Ascending aorta (tissue), 2 donors: ENCODE measurements at regions of chr4 and their contacts with region 1.

Region 1: GRCh38 chr4:40924096-40924792 is 174.5 kb downstream of the NSUN7 start:
- DNase-seq: peak in 1 of 2 donors; percentile 83
- H3K4me3 ChIP-seq: peak overlapping the region in 1 of 2 donors; percentile 43
- H3K27ac ChIP-seq: peak overlapping the region; percentile 87
- H3K4me1 ChIP-seq: peaks cover 7 to 15% of the 10 kb centered on the region in 2 donors
- H3K27me3 ChIP-seq: no peaks in the 10 kb centered on the region
- CTCF ChIP-seq: peak; percentile 60 to 90 (median 80)

Region 2: GRCh38 chr4:40908702-40909362 is 15.4 kb before region 1 on chr4:
- intact Hi-C with region 1: loop called (anchors 1 kb)
- DNase-seq: peak; percentile 26 to 90
- H3K4me3 ChIP-seq: peak overlapping the region in 1 of 2 donors; percentile 4
- H3K27ac ChIP-seq: peak overlapping the region; percentile 79 to 91
- H3K4me1 ChIP-seq: peaks cover 12 to 25% of the 10 kb centered on the region in 2 donors
- H3K27me3 ChIP-seq: no peaks in the 10 kb centered on the region
- CTCF ChIP-seq: peak; percentile 92 to 94 (median 92)

Region 3: DNA sequence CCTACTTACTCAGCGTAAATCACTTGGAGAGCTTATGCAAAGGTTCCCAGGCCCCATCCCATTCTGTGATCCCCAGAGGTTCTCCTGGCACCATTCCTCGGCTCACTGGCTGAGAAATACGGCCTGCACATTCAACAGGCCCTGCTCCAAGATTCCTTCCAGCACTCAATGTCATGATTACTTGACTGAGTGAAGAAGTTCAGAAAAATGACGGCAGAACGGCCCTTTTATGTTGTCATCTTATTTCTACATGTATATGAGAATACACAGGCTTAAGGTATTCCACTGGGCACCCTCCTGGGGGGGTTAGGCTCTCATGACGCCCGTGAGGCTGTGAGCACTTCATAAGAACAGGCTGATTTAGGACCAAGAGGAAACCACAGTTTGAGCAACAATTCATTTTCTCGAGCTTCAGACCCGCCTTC is 16.1 kb after region 1 on chr4:
- intact Hi-C with region 1: loop called (anchors 1 kb)
- DNase-seq: peak in 1 of 2 donors; percentile 79
- H3K4me3 ChIP-seq: peak overlapping the region in 1 of 2 donors; percentile 18
- H3K27ac ChIP-seq: peak overlapping the region; percentile 49 to 72
- H3K4me1 ChIP-seq: peaks cover 15 to 43% of the 10 kb centered on the region in 2 donors
- H3K27me3 ChIP-seq: no peaks in the 10 kb centered on the region
- CTCF ChIP-seq: no peak

Region 4: DNA sequence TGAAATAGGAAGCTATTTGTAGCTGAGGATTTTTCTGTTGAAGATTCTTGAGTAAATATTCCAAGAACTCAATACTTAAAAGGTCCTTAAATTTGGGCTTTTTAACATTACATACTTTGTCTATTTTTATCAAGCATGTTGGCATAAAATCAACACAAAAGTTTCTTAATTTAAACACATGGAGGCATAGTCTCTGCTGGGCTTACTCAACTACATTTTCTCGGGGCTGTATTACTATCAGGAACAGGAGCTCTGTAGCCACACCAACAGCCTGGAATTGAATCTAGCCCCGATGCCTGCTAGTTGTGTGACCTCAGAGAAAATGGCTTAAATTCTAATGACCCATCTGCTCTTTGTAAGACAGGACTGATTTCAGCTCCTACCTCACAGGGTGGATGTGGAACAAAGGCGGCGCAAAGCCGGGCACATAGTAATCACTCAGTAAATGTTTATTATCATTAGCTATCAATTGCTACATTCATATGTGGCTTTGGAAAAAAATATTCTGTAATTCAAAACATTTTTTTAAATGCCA is 32.5 kb after region 1 on chr4:
- intact Hi-C with region 1: loop called (anchors 2 kb)
- DNase-seq: no peak
- H3K4me3 ChIP-seq: peak overlapping the region in 1 of 2 donors; percentile 8
- H3K27ac ChIP-seq: peak overlapping the region; percentile 92 to 95
- H3K4me1 ChIP-seq: peaks cover 25 to 52% of the 10 kb centered on the region in 2 donors
- H3K27me3 ChIP-seq: no peaks in the 10 kb centered on the region
- CTCF ChIP-seq: no peak

Region 5: GRCh38 chr4:40976343-40976742 is 52.1 kb after region 1 on chr4:
- intact Hi-C with region 1: loop called (anchors 1 kb)
- DNase-seq: no peak
- H3K4me3 ChIP-seq: no peak overlapping the region
- H3K27ac ChIP-seq: no peak overlapping the region
- H3K4me1 ChIP-seq: no peaks in the 10 kb centered on the region
- H3K27me3 ChIP-seq: no peaks in the 10 kb centered on the region
- CTCF ChIP-seq: peak; percentile 50 to 79 (median 53)

Region 6: DNA sequence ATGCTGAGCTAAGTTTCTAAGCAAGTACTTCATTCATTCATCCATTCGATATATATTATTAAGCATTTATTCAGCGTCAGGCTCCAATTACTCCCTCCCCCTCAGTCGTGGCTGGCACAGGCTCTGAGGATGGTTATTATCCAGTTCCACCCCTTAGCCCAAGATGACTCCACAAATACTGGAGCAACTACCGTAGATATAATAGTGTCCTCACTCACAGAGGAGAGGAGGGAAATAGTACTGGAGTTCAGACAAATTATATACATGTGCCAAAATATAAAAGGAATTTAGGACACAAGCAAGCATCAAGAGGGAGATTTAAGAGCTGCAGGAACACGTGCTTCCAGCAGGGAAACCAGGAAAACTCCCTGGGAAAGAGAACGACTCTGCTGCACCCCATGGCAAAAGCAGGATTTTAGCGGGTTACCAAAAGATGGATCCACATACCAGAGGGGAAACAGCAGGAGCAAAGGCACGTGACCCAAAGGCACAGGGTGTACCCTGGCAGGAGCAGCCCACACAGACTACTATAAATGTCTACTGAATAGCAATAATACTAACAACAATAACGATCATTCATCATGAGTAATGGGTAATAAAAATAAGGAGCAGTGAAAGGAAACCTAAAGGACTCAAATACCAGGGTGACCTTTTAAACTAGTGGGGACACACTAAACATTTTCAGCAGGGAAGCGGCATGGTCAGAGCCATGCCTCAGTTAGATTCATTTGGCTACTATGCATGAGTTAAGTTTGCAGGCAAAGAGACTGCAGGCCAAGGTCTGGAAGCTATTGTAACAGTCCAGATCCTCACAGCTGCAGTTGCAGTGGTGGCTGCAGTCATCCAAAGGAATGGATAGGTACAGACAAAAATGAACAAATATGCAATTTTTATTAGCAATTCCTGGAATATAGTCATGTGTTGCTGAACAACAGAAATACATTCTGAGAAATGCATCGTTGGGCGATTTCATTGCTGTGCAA is 136.4 kb after region 1 on chr4:
- intact Hi-C with region 1: loop called (anchors 5 kb)
- DNase-seq: no peak
- H3K4me3 ChIP-seq: peak overlapping the region in 1 of 2 donors; percentile 0
- H3K27ac ChIP-seq: peak overlapping the region in 1 of 2 donors; percentile 55
- H3K4me1 ChIP-seq: peaks cover 2 to 40% of the 10 kb centered on the region in 2 donors
- H3K27me3 ChIP-seq: no peaks in the 10 kb centered on the region
- CTCF ChIP-seq: no peak

Region 7: DNA sequence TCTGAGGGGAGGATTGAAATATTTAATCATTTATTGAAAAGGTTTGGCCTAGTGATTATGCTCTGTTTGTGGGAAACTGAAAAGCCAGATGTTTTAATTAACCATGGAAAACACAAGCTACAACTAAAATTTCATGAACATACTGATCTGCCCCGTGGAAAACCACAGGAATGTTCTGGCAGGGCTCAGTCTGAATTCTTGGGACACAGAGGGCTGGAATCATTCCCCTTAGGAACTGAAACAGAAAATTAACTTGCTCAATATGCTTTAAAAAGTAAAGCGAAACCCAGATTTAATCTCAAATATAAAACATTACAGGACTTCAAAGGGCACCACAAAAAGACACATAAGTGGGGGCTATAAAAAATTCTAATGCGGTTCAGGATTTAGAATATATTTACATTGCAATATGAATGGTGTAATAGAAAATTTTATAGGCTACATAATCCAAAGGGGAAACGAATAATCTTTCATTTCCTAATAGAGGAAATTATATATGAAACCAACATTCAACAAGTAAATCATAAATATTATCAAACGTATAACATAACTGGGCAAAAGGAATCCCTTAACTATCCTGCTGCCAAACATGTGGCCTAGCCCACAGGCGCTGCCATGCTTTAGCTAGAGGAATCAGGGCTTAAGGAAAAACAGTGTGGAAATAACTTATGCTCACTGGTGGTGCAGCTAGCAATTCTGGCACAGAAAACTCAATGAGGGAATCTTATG is 219.2 kb after region 1 on chr4:
- intact Hi-C with region 1: loop called (anchors 5 kb)
- DNase-seq: peak in 1 of 2 donors; percentile 81
- H3K4me3 ChIP-seq: peak overlapping the region; percentile 24 to 45
- H3K27ac ChIP-seq: peak overlapping the region; percentile 80 to 92
- H3K4me1 ChIP-seq: peaks cover 27 to 60% of the 10 kb centered on the region in 2 donors
- H3K27me3 ChIP-seq: no peaks in the 10 kb centered on the region
- CTCF ChIP-seq: no peak